ENCODE measurements at regions of chr15 and their contacts with region 1.

Region 1: DNA sequence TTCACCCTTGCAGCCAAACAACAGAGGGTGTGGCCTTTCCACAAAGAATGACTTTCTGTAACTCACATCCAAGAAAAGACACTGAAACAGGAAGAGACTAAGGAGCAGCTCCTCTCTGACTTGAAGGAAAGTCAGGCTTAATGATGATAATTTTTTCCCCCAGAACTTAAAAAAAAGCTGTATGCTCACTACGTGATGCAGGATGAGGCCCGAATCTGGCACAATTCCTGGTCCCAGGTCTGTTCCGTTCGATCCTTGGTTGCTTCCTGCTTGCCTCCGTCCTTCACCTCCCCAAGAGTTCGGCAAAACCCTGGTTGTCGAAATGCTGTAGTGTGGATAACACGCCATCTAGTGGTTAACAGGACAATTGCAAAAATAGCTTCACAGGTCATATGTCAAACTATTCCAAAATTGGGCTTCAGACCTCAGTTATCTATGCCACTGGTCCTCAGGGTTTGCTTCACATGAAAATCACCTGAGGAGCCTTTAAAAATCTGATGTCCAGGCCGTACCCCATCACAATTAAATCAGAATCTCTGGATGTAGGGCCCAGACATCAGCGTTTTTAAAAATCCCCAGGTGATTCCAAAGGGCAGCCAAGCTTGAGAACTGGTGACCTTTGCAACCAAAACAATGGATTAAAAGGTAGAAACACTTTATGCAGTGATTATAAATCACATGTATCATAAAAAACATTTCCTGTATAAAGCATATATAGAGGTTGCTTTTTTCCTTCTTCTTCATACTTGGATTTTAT is 28.1 kb upstream of the SYNM start:
- DNase-seq: peak; percentile 66 to 81 (median 70)
- ATAC-seq: peak; percentile 83 to 90
- H3K4me3 ChIP-seq: peak overlapping the region; percentile 38
- H3K27ac ChIP-seq: no peak overlapping the region
- H3K4me1 ChIP-seq: no peaks in the 10 kb centered on the region
- H3K27me3 ChIP-seq: no peaks in the 10 kb centered on the region

Region 2: DNA sequence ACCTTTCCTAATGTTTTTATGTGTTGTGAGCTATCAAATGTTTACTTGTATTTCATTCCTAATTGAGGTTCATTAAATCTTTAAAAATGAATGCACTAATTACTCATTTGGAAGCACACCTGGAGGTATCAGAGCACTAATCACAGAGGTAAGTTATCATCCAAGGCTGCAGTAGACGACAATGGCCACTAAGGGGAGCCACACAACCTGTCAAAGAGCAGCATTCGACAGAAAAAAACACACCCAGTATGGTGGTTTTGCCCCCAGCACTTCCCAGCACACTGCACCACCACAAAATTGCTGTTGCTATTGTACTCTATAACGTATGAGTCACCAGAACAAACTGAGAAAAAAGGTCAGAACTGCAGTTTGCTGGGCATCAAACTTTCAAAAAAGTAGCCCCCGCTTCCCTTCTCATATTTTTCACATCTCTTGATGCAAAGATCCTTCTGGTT is 634.3 kb before region 1 on chr15:
- intact Hi-C with region 1: loop called in 3 of 4 experiments (anchors 5 to 10 kb)
- DNase-seq: no peak
- ATAC-seq: peak in 1 of 2 donors; percentile 61
- H3K4me3 ChIP-seq: no peak overlapping the region
- H3K27ac ChIP-seq: no peak overlapping the region
- H3K4me1 ChIP-seq: no peaks in the 10 kb centered on the region
- H3K27me3 ChIP-seq: no peaks in the 10 kb centered on the region

Region 3: GRCh38 chr15:98518823-98519561 is 557.7 kb before region 1 on chr15:
- intact Hi-C with region 1: loop called in 3 of 4 experiments (anchors 5 to 10 kb)
- DNase-seq: peak in 2 of 3 donors; percentile 40 to 49
- ATAC-seq: peak; percentile 79 to 83
- H3K4me3 ChIP-seq: no peak overlapping the region
- H3K27ac ChIP-seq: no peak overlapping the region
- H3K4me1 ChIP-seq: no peaks in the 10 kb centered on the region
- H3K27me3 ChIP-seq: no peaks in the 10 kb centered on the region

Region 4: DNA sequence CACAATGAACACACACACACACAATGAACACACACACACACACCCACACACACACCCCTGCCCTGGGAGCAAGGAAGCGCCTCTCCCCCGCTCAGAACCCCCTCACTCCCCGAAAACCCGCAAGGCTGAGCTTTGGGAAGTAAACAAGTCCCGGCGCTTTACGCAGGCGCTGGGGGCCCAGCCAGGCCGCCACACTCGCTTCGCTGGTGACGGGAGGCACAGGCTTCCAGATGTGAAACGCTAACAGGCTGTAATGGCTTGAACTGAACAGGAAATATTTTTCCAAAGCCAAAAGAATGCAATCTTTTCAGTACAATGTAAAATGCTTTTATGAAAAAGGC is 551.1 kb before region 1 on chr15:
- intact Hi-C with region 1: loop called in 1 of 4 experiments (anchors 5 kb)
- DNase-seq: peak; percentile 35 to 69 (median 65)
- ATAC-seq: peak; percentile 29 to 41
- H3K4me3 ChIP-seq: no peak overlapping the region
- H3K27ac ChIP-seq: no peak overlapping the region
- H3K4me1 ChIP-seq: no peaks in the 10 kb centered on the region
- H3K27me3 ChIP-seq: no peaks in the 10 kb centered on the region

Region 5: DNA sequence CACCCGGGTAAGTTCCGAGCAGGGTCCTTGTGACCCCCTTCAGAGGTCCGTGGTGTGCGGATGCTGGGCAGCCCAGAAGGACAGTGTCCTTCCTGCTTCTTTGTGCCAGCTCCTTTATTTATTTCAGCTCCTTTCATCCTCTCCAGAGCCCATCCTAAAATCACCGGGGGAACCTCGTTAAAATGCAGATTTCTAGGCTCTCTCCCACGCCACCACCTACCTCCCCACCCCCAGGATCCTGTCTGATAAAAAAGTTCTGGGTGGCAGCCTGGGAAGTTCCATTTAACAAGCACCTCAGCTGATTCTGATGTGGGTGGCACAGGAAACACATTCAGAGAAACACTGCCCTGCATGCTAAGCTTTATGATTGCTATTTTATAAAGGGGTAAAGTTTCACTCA is 440.9 kb before region 1 on chr15:
- intact Hi-C with region 1: loop called in 1 of 4 experiments (anchors 10 kb)
- DNase-seq: no peak
- ATAC-seq: no peak
- H3K4me3 ChIP-seq: no peak overlapping the region
- H3K27ac ChIP-seq: no peak overlapping the region
- H3K4me1 ChIP-seq: no peaks in the 10 kb centered on the region
- H3K27me3 ChIP-seq: no peaks in the 10 kb centered on the region

Region 6: DNA sequence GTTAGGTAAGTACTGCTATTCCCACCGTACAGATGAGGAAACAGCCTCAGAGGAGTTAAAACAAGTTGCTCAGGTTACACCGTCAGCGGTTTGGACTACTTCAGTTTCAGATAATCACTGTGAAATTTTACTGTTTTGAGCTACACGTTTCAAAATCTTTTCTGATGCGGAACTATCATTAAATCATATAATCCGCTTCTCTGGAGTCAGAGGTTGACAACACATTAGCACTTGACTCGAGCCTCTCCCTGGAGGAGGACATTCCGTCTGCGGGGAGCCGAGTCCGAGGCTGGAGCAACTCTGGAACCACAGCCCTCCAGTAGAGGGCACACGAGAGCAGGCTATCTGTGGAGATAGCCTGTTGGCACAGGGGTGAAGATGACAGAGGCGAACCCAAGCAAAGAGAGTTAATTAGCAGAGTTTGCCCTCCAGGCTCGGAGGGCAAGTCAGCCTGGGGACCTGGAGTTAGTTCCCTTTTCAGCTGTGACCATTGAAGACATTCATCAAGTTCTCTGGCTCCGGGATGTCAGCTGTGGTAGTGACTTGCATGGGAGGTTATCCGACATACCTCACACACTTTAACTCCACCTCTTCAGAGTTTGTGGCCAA is 297.2 kb before region 1 on chr15:
- intact Hi-C with region 1: loop called in 1 of 4 experiments (anchors 5 kb)
- DNase-seq: peak; percentile 80 to 91 (median 90)
- ATAC-seq: peak; percentile 87 to 92
- H3K4me3 ChIP-seq: no peak overlapping the region
- H3K27ac ChIP-seq: no peak overlapping the region
- H3K4me1 ChIP-seq: no peaks in the 10 kb centered on the region
- H3K27me3 ChIP-seq: no peaks in the 10 kb centered on the region